Adrenal gland (tissue), 19 donors: ENCODE measurements at regions of chr6 and their contacts with region 1.

Region 1: DNA sequence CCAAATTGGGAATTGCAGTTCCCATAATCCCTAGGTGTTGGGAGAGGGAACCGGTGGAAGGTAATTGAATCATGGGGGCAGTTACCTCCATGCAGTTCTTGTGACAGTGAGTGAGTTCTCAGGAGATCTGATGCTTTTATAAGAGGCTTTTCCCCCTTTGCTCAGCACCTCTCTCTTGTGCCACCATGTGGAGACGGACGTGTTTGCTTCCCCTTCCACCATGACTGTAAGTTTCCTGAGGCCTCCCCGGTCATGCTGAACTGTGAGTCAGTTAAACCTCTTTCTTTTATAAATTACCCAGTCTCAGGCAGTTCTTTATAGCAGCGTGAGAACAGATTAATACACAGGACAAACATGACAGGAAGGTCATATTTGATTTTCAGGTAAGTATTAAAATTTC is 25.3 kb upstream of the HECA start:
- DNase-seq: no peak
- H3K4me3 ChIP-seq: no peak overlapping the region
- H3K27ac ChIP-seq: no peak overlapping the region
- H3K4me1 ChIP-seq: no peaks in the 10 kb centered on the region
- H3K27me3 ChIP-seq: no peaks in the 10 kb centered on the region
- CTCF ChIP-seq: no peak
- POLR2A ChIP-seq: no peak

Region 2: GRCh38 chr6:138999954-139000725 is 109.4 kb before region 1 on chr6:
- intact Hi-C with region 1: loop called in 1 of 2 experiments (anchors 10 kb)
- DNase-seq: no peak
- H3K4me3 ChIP-seq: no peak overlapping the region
- H3K27ac ChIP-seq: no peak overlapping the region
- H3K4me1 ChIP-seq: no peaks in the 10 kb centered on the region
- H3K27me3 ChIP-seq: no peaks in the 10 kb centered on the region
- CTCF ChIP-seq: no peak
- POLR2A ChIP-seq: no peak

Region 3: DNA sequence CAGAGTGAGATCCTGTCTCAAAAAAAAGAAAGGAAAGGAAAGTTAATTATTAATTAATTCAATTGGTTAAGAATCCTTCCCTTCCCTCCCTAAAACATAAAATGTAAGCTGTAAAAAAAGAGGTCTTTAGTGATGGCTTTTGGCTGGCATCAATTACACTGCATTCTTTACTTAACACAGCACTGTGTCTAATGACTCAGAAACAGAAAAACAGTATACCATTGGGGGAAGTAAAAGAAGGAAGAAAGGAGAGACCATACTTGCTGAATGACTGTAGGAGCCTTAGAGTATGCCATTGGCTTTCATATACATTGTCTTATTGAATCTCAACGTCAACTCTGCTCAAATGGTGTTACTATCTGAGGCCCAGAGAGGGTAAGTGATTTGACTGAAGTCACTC is 283.2 kb after region 1 on chr6:
- intact Hi-C with region 1: no loop called
- DNase-seq: no peak
- H3K4me3 ChIP-seq: no peak overlapping the region
- H3K27ac ChIP-seq: no peak overlapping the region
- H3K4me1 ChIP-seq: no peaks in the 10 kb centered on the region
- H3K27me3 ChIP-seq: no peaks in the 10 kb centered on the region
- CTCF ChIP-seq: no peak
- POLR2A ChIP-seq: no peak